ENCODE measurements at regions of chr1 and their contacts with region 1.

Region 1: DNA sequence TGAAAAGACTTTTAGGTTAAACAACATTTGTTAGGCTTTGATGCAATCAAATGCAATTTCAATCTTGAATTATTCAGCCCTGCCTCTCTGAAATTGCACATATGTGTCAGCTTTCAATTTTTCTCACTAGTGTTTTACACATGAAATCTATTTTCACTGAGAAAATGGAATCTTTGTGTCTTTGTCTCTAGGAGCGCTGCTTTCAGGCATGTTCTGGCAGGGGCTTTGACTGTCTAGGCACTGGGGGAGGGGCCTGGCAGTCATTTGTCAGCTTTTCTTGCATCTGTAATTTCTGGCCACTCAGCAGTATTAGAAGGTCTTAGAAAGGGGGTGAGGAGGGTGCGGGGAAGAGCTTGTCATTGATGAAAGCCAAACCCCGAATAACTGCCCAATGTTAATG is 264.4 kb downstream of the PTPRC start:
- DNase-seq: peak in 1 of 2 donors; percentile 12
- ATAC-seq: no peak
- H3K4me3 ChIP-seq: no peak overlapping the region
- H3K27ac ChIP-seq: peak overlapping the region in 4 of 10 donors; percentile 2 to 57 (median 48)
- H3K4me1 ChIP-seq: peaks cover 0 to 50% (median 31%) of the 10 kb centered on the region in 9 donors
- H3K27me3 ChIP-seq: no peaks in the 10 kb centered on the region
- CTCF ChIP-seq: no peak

Region 2: GRCh38 chr1:198867182-198867581 is 36.0 kb before region 1 on chr1:
- intact Hi-C with region 1: loop called in 1 of 10 experiments (anchors 5 kb)
- DNase-seq: no peak
- ATAC-seq: no peak
- H3K4me3 ChIP-seq: no peak overlapping the region
- H3K27ac ChIP-seq: peak overlapping the region in 1 of 10 donors; percentile 3
- H3K4me1 ChIP-seq: peaks cover 0 to 30% (median 8%) of the 10 kb centered on the region in 9 donors
- H3K27me3 ChIP-seq: no peaks in the 10 kb centered on the region
- CTCF ChIP-seq: no peak

Region 3: DNA sequence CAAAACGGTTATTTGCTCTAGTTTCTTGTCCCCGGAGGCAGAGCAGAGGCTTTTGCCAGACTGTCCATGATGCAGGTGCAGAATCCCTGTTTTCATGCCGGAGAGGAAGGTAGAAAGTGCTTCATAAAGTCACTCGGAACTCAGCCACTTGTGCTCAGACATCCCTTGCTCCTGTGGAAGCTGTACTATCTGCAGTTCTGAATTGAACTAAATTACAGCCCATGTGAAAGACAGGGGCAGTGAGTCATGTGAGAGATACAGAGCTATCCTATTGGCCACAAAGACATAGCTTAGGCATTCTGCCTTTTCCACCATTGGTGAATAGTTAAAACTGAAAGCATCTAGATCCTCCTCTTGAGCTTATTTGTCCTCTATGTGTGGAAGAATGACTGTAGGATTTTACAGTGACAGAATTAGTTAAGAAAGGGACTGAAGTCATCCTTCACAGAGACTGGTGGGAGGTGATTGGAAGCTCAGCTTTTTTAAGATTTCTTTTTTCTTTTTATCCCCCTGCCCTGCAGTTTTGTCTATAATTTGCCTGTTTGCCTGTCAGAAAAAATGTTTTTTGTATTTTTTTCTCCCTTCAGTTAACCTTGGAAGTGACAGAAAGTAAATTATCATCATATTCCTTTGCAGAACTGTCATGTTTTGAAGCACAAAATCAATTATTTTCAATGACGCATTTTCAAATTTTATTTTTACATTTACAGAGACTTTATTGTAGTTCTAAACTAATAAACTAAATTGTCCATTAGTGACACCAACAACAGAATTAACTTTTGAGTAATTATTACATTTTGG is 34.2 kb after region 1 on chr1:
- intact Hi-C with region 1: loop called in 1 of 10 experiments (anchors 5 kb)
- DNase-seq: peak in 1 of 2 donors; percentile 67
- ATAC-seq: peak; percentile 97 to 98 (median 97)
- H3K4me3 ChIP-seq: peak overlapping the region; percentile 24 to 80 (median 59)
- H3K27ac ChIP-seq: peak overlapping the region in 9 of 10 donors; percentile 61 to 88 (median 77)
- H3K4me1 ChIP-seq: peaks cover 2 to 42% (median 20%) of the 10 kb centered on the region in 9 donors
- H3K27me3 ChIP-seq: no peaks in the 10 kb centered on the region
- CTCF ChIP-seq: no peak

Region 4: DNA sequence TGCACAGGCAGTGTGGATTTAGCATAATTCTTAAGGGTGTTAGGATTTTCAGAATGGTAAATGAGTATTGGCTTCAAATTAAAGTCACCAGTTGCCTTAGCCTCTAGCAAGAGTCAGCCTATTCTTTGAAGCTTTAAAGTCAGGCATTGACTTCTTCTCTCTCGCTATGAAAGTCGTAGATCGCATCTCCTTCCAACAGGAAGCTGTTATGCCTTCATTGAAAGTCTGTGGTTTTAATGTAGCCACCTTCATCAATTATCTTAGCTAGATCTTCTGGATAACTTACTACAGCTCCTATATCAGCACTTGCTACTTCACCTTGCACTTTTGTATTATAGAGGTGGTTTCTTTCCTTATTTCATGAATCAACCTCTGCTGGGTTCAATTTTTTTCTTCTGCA is 55.8 kb after region 1 on chr1:
- intact Hi-C with region 1: no loop called
- DNase-seq: no peak
- ATAC-seq: no peak
- H3K4me3 ChIP-seq: no peak overlapping the region
- H3K27ac ChIP-seq: no peak overlapping the region
- H3K4me1 ChIP-seq: no peaks in the 10 kb centered on the region
- H3K27me3 ChIP-seq: no peaks in the 10 kb centered on the region
- CTCF ChIP-seq: no peak